ENCODE measurements at regions of chrX and their contacts with region 1.

Region 1: DNA sequence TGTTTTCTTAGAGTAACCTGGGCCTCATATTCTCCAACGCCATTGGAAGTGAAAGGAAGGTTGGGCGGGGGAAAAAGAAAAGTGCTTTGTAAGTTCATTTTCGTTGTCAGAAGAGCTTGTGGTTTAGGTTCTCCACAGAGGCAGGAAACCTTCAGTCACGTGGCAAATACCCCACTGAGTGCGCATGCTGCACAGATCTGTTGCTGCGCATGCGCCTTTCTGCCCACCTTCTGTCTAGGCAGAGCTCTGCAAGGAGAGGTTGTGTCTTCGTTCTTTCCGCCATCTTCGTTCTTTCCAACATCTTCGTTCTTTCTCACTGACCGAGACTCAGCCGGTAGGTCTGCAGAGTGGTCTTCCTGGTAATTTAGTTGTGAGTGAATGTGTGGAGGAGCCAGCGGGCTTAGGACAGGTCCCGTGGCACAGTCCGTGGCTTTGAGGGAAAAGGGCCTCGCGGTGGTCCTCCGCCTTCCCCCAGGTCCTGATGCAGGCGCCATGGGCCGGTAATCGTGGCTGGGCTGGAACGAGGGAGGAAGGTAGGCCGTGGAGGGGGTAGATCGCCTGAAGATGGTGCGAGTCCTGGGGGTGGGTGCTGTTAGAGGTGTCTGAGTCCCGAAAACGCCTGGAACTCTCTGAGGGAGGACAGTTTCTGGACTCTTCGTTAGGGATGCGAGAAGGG is at the start of gene PAGE5:
- DNase-seq: no peak
- ATAC-seq: no peak
- H3K4me3 ChIP-seq: no peak within 1 kb of the TSS
- H3K27ac ChIP-seq: no peak within 1 kb of the TSS
- H3K4me1 ChIP-seq: no peaks in the 10 kb centered on the region
- H3K27me3 ChIP-seq: no peaks in the 10 kb centered on the region
- CTCF ChIP-seq: no peak
- POLR2A ChIP-seq: no peak
- total RNA-seq, gene PAGE5: not detected

Region 2: DNA sequence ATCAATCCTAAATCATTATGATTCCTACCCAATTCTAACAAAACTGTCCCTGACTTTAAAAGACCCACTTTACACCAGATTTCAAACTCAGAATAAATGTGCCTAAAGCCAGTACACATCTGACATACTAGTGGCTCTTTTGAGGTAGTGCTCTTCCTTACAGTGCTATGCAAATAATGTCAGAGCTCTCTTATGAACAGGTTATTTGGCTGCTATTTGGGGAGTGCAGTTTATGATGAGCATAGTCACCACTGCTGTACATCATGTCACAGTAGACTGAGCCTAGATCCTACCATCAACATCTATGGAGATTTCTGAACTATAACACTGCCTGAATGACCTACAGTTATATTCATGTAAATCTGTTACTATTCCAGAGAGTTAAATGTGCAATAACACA is 50.5 kb before region 1 on chrX:
- intact Hi-C with region 1: loop called (anchors 10 kb)
- DNase-seq: no peak
- ATAC-seq: no peak
- H3K4me3 ChIP-seq: no peak overlapping the region
- H3K27ac ChIP-seq: no peak overlapping the region
- H3K4me1 ChIP-seq: no peaks in the 10 kb centered on the region
- H3K27me3 ChIP-seq: no peaks in the 10 kb centered on the region
- CTCF ChIP-seq: no peak
- POLR2A ChIP-seq: no peak

Region 3: GRCh38 chrX:55524487-55524886 is 304.2 kb after region 1 on chrX:
- intact Hi-C with region 1: no loop called
- DNase-seq: peak in 1 of 4 donors; percentile 9
- ATAC-seq: no peak
- H3K4me3 ChIP-seq: no peak overlapping the region
- H3K27ac ChIP-seq: no peak overlapping the region
- H3K4me1 ChIP-seq: no peaks in the 10 kb centered on the region
- H3K27me3 ChIP-seq: no peaks in the 10 kb centered on the region
- CTCF ChIP-seq: peak in 4 of 7 experiments; percentile 9 to 32 (median 23)
- POLR2A ChIP-seq: no peak